ENCODE measurements at regions of chr5 and their contacts with region 1.

Region 1: DNA sequence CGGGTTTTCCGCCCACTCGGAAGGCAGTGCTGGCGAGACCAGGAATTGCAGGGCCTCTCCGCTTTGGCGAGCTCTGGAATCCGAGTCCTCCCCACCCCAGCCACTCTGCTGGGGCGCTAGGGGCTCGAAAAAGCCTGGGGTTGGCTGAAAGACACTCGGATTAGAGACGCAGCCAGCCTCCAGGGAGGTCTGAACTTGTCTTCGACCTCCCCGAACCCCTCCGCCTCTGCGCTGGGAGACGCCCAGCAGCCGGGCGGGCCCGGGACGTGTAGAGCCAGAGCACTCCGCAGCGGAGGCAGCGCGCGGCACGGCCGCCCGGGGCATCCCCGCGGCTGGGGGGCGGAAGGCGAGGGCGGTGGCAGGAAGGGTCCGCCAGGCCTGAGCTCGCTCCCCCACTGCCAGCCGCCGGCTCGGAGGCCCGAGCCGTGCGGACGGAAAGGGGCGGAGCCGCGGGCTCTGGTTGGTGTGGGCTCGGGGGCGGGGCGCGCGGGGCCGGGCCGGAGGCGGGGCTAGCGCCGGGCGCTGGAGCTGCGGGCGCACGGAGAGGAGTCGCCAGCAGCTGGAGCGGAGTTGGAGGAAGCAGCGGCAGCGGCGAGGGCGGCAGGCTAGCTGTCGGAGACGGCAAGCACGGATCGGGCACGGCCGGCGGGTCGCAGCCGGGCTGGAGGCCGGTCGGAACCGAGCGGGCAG is at the start of gene PIK3R1:
- DNase-seq: peak; percentile 96
- ATAC-seq: peak; percentile 83
- H3K4me3 Mint-ChIP-seq: peak within 1 kb of the TSS; percentile 95
- H3K27ac Mint-ChIP-seq: peak within 1 kb of the TSS; percentile 96
- H3K4me1 Mint-ChIP-seq: peaks cover 43% of the 10 kb centered on the region
- H3K27me3 Mint-ChIP-seq: no peaks in the 10 kb centered on the region
- CTCF ChIP-seq: no peak
- total RNA-seq, gene PIK3R1: 45.5 and 52.2 TPM in 2 replicates

Region 2: DNA sequence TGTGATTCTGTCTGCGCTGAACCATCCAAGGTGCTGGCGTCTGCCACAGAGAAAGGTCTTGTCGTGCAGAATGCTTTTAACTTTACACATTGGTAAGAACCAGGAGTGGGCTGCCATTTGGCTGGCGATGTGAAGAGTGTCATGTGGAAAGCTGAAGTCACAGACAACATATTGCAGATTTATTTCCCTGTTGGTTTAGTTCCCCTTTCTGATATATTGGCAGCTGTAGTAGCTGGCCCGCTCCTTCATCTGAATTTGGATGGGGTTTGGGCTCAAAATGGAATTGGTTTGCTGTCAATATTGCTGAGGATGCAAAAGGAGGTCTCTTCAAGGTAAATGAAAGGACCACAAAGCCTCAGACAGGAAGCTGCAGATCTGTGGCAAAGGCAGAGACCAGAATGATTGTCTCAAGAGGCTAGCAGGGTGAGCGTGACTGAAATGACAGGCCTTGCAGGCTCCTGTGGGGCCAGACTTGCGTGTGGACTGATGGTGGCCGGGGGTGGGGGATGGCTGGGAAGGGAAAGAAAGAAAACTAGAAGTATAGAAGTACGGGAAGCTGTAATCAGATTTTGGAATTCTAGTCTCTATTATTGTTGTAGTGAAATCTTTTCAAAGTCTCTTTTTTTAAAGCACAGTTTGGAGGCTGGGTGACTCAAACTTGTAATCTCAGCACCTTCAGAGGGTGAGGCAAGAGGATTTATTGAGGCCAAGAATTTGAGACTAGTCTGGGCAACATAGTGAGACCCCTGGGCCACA is 993.7 kb before region 1 on chr5:
- CTCF ChIA-PET with region 1: no interaction called
- POLR2A ChIA-PET with region 1: interaction called, 14 read pairs
- intact Hi-C with region 1: no loop called
- DNase-seq: no peak
- ATAC-seq: peak; percentile 75
- H3K4me3 Mint-ChIP-seq: peak overlapping the region; percentile 78
- H3K27ac Mint-ChIP-seq: peak overlapping the region; percentile 97
- H3K4me1 Mint-ChIP-seq: peaks cover 65% of the 10 kb centered on the region
- H3K27me3 Mint-ChIP-seq: no peaks in the 10 kb centered on the region
- CTCF ChIP-seq: no peak

Region 3: DNA sequence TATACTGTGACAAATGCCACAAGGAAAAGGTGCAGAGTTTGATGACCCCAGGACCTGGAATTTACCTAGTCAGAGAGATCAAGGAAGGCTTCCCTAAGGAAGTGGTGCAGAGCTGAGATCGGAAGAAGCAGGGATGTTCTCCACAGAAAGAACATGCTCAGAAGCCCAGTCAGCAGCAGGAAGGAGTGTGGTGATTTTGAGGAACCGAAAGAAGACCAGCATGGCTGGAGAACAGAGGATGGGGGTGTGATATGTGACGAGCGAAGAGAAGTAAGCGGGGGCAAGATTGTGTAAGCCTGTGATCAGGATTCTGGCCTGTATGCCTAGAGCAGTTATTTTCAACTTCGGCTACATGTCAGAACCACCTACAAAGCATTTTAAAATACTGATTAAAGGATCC is 18.5 kb before region 1 on chr5:
- CTCF ChIA-PET with region 1: interaction called, 10 read pairs
- POLR2A ChIA-PET with region 1: interaction called, 22 read pairs
- intact Hi-C with region 1: loop called (anchors 1 kb)
- DNase-seq: peak; percentile 21
- ATAC-seq: peak; percentile 99
- H3K4me3 Mint-ChIP-seq: peak overlapping the region; percentile 0
- H3K27ac Mint-ChIP-seq: peak overlapping the region; percentile 3
- H3K4me1 Mint-ChIP-seq: peaks cover 39% of the 10 kb centered on the region
- H3K27me3 Mint-ChIP-seq: no peaks in the 10 kb centered on the region
- CTCF ChIP-seq: no peak

Region 4: GRCh38 chr5:68246802-68247201 is 31.4 kb after region 1 on chr5:
- CTCF ChIA-PET with region 1: interaction called, 24 read pairs
- POLR2A ChIA-PET with region 1: interaction called, 31 read pairs
- intact Hi-C with region 1: loop called (anchors 1 kb)
- DNase-seq: no peak
- ATAC-seq: no peak
- H3K4me3 Mint-ChIP-seq: no peak overlapping the region
- H3K27ac Mint-ChIP-seq: no peak overlapping the region
- H3K4me1 Mint-ChIP-seq: peaks cover 77% of the 10 kb centered on the region
- H3K27me3 Mint-ChIP-seq: no peaks in the 10 kb centered on the region
- CTCF ChIP-seq: no peak

Measured in activated B cell treated with CpG ODN at 0.5 μM for 24 hours (primary cell).